ENCODE measurements at regions of chr11 and their contacts with region 1.

Region 1: GRCh38 chr11:67401495-67402191 is at the start of gene PPP1CA:
- DNase-seq: peak; percentile 93
- H3K4me3 ChIP-seq: peak within 1 kb of the TSS; percentile 64 to 98 (median 92)
- H3K27ac ChIP-seq: peak within 1 kb of the TSS; percentile 90 to 98 (median 93)
- H3K4me1 ChIP-seq: peaks cover 20 to 38% (median 30%) of the 10 kb centered on the region in 4 donors
- H3K27me3 ChIP-seq: no peaks in the 10 kb centered on the region
- CTCF ChIP-seq: peak in 4 of 5 experiments; percentile 2 to 66 (median 42)
- EP300 ChIP-seq: no peak
- POLR2A ChIP-seq: peak; percentile 79
- total RNA-seq, gene PPP1CA: 83.0 to 251 (median 163) TPM

Region 2: GRCh38 chr11:66466225-66467027 is 935.2 kb before region 1 on chr11 and contains the start of gene PELI3:
- in situ Hi-C with region 1: no loop called
- intact Hi-C with region 1: no loop called
- DNase-seq: peak; percentile 96
- H3K4me3 ChIP-seq: peak within 1 kb of the TSS; percentile 69 to 85 (median 76)
- H3K27ac ChIP-seq: peak within 1 kb of the TSS; percentile 76 to 80 (median 76)
- H3K4me1 ChIP-seq: peaks cover 9 to 20% (median 14%) of the 10 kb centered on the region in 4 donors
- H3K27me3 ChIP-seq: no peaks in the 10 kb centered on the region
- CTCF ChIP-seq: no peak
- EP300 ChIP-seq: no peak
- POLR2A ChIP-seq: peak; percentile 47
- total RNA-seq, gene PELI3: 1.2 to 14.2 (median 7.8) TPM

Region 3: GRCh38 chr11:67482825-67483798 is 81.5 kb after region 1 on chr11 and contains the start of gene AIP:
- in situ Hi-C with region 1: loop called in 2 of 4 experiments (anchors 10 kb)
- intact Hi-C with region 1: loop called (anchors 5 kb)
- DNase-seq: peak; percentile 98
- H3K4me3 ChIP-seq: peak within 1 kb of the TSS; percentile 40 to 62 (median 46)
- H3K27ac ChIP-seq: peak within 1 kb of the TSS; percentile 82 to 90 (median 90)
- H3K4me1 ChIP-seq: peaks cover 15 to 32% (median 25%) of the 10 kb centered on the region in 4 donors
- H3K27me3 ChIP-seq: no peaks in the 10 kb centered on the region
- CTCF ChIP-seq: peak in 3 of 5 experiments; percentile 21 to 69 (median 50)
- EP300 ChIP-seq: no peak
- POLR2A ChIP-seq: peak; percentile 78
- total RNA-seq, gene AIP: 32.9 to 71.5 (median 57.6) TPM

Region 4: GRCh38 chr11:67505605-67506396 is 104.2 kb after region 1 on chr11:
- in situ Hi-C with region 1: no loop called
- intact Hi-C with region 1: loop called (anchors 1 kb)
- DNase-seq: peak; percentile 95
- H3K4me3 ChIP-seq: peak overlapping the region in 3 of 4 donors; percentile 65 to 82 (median 81)
- H3K27ac ChIP-seq: peak overlapping the region; percentile 98 to 100 (median 98)
- H3K4me1 ChIP-seq: peaks cover 26 to 51% (median 39%) of the 10 kb centered on the region in 4 donors
- H3K27me3 ChIP-seq: no peaks in the 10 kb centered on the region
- CTCF ChIP-seq: peak; percentile 95 to 99 (median 98)
- EP300 ChIP-seq: no peak
- POLR2A ChIP-seq: peak; percentile 84

Region 5: DNA sequence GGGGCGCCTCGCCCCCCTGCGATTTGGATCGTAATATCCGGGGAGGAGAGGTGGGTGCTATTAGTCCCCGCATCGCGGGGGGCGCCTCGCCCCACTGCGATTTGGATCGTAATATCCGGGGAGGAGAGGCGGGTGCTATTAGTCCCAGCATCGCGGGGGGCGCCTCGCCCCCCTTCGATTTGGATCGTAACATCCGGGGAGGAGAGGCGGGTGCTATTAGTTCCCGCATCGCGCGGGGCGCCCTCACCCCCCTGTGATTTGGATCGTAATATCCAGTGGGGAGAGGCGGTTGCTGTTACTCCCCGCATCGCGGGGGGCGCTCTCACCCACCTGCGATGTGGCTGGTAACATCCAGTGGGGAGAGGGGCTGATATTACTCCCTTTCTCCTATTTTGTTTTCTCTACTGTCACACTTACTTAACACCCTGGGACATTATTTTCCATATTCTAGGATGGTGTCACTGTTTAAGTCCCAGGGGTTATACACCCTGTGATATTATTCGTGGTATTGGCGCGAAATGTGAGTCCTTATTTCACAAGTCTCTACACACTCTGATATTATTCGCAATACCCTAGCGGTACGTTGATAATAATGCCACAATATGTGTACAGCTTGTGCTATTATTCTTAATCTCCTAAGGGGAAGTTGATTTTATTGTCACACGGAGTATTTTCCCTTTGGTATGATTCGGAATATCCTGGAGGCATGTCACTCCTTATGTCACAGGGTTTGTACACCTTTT is 330.6 kb after region 1 on chr11:
- in situ Hi-C with region 1: no loop called
- intact Hi-C with region 1: no loop called
- DNase-seq: no peak
- H3K4me3 ChIP-seq: peak overlapping the region in 2 of 4 donors; percentile 17 to 35
- H3K27ac ChIP-seq: no peak overlapping the region
- H3K4me1 ChIP-seq: peaks cover 0 to 11% (median 6%) of the 10 kb centered on the region in 4 donors
- H3K27me3 ChIP-seq: peaks cover 10% of the 10 kb centered on the region
- CTCF ChIP-seq: peak in 2 of 5 experiments; percentile 31 to 36
- EP300 ChIP-seq: no peak
- POLR2A ChIP-seq: no peak

Measured in transverse colon (tissue), 4 donors.